A673 (cell line): ENCODE measurements at regions of chr15 and their contacts with region 1.

Region 1: GRCh38 chr15:74742422-74742821 is 6.2 kb upstream of the CYP1A2 start:
- DNase-seq: no peak
- H3K4me3 ChIP-seq: no peak overlapping the region
- H3K27ac ChIP-seq: no peak overlapping the region
- H3K4me1 ChIP-seq: no peaks in the 10 kb centered on the region
- H3K27me3 ChIP-seq: no peaks in the 10 kb centered on the region
- CTCF ChIP-seq: no peak

Region 2: GRCh38 chr15:74716644-74717043 is 25.8 kb before region 1 on chr15:
- CTCF ChIA-PET with region 1: no interaction called
- POLR2A ChIA-PET with region 1: interaction called, 10 read pairs
- intact Hi-C with region 1: no loop called
- DNase-seq: no peak
- H3K4me3 ChIP-seq: no peak overlapping the region
- H3K27ac ChIP-seq: no peak overlapping the region
- H3K4me1 ChIP-seq: no peaks in the 10 kb centered on the region
- H3K27me3 ChIP-seq: no peaks in the 10 kb centered on the region
- CTCF ChIP-seq: no peak

Region 3: DNA sequence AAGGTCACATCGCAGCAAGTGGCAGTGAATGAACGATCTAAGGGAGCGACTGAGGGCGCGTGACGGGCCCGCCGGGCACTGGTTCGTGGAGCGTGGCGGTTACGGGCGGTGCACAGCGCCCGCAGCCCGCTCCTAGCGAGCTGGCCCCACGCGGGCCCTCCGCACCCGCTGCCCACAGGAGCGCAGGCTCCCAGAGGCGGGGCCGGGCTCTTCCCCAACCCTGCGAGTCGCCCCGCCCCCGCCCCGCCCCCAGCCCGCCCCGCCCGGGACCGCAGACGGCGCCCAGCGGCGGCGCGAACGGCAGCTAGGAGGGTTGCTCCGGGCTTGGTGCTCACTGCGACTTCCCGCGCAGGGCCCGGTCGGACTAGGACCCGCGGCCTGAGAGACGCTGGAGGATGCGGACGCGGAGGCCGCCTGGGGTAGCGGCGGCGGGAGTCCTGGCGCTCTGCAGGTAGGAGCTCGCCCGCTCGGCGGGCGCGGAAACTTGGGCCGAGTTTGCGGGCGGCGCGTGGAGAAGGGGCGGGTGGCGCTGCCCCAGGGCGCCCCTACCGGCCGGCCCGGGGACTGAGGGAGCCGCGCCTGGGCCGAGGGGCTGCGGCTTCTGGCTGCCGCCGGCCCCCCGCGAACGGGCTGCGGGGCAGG is 459.3 kb after region 1 on chr15 and contains the start of gene C15orf39:
- CTCF ChIA-PET with region 1: no interaction called
- POLR2A ChIA-PET with region 1: no interaction called
- intact Hi-C with region 1: no loop called
- DNase-seq: peak; percentile 83
- H3K4me3 ChIP-seq: peak within 1 kb of the TSS; percentile 99
- H3K27ac ChIP-seq: peak within 1 kb of the TSS; percentile 93
- H3K4me1 ChIP-seq: peaks cover 30% of the 10 kb centered on the region
- H3K27me3 ChIP-seq: no peaks in the 10 kb centered on the region
- CTCF ChIP-seq: peak; percentile 63
- total RNA-seq, gene C15orf39: 28.9 and 30.3 TPM in 2 replicates